ENCODE measurements at regions of chr3 and their contacts with region 1.

Region 1: GRCh38 chr3:17044855-17045254 is 160.1 kb downstream of the PLCL2 start:
- DNase-seq: no peak
- H3K4me3 Mint-ChIP-seq: no peak overlapping the region
- H3K27ac Mint-ChIP-seq: peak overlapping the region; percentile 40
- H3K4me1 Mint-ChIP-seq: peaks cover 57% of the 10 kb centered on the region
- H3K27me3 Mint-ChIP-seq: no peaks in the 10 kb centered on the region

Region 2: DNA sequence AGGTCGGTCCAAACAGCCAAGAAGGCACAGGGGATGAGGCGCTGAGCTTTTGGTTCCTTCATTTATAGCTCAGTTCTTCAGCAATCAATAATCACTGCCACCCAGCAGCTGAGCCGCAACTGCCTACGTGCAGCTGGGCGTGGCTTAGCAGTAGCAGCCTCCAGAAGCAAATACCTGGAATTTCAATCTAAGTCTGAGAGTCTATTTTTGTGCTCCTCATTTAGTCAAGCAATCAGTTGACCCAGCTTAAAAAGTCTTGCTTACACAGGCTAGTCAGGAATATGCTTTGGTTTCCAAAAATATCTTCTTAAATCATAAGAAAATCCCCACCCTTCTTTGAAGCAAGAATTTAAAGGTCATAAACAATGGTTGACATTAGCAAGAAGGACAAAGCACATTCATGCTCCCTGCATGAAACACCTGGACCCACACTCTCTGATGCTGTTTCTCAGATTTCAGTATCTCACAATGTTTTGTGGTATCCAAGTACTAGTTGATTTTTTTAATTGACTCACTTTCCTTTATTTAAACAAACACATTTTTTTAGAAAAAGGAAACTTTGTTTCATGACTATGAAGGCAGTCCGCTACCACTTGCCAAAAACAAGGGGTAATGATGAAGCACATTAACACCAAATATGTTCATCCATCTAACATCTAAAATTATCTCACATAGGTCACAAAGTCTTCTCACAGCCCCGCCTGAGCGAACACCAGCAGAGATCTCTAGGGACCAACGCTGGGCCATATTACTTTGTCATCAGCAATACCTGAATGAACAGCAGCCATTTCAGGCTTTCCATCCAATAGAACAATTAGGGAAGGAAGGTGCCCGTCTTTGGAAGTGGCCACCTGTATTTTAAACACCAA is 673.7 kb before region 1 on chr3:
- intact Hi-C with region 1: no loop called
- DNase-seq: no peak
- H3K4me3 Mint-ChIP-seq: peak overlapping the region; percentile 25
- H3K27ac Mint-ChIP-seq: peak overlapping the region; percentile 82
- H3K4me1 Mint-ChIP-seq: peaks cover 79% of the 10 kb centered on the region
- H3K27me3 Mint-ChIP-seq: no peaks in the 10 kb centered on the region

Region 3: GRCh38 chr3:17032407-17033034 is 12.3 kb before region 1 on chr3:
- intact Hi-C with region 1: loop called (anchors 1 kb)
- DNase-seq: no peak
- H3K4me3 Mint-ChIP-seq: no peak overlapping the region
- H3K27ac Mint-ChIP-seq: peak overlapping the region; percentile 2
- H3K4me1 Mint-ChIP-seq: peaks cover 64% of the 10 kb centered on the region
- H3K27me3 Mint-ChIP-seq: peaks cover 1% of the 10 kb centered on the region

Region 4: DNA sequence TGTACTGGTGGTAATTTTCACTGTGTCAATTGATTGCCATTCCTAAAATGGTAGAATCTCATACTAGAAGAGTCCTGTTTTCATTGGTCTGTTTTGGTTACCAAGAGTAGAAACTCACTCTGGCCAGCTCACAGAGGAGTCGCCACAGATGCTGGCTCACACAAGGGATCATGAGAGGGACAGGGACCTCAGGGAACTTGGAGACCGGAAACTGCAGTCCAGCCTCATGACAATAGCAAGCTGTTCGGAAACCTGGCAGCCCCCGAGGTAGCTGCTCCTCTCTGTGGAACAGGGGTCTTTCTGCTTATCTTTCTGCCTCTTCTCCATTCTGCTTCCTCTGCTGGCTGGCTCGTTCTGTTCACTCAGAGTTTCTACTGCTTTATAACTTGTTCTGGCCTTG is 32.8 kb after region 1 on chr3:
- intact Hi-C with region 1: loop called (anchors 2 kb)
- DNase-seq: no peak
- H3K4me3 Mint-ChIP-seq: no peak overlapping the region
- H3K27ac Mint-ChIP-seq: peak overlapping the region; percentile 73
- H3K4me1 Mint-ChIP-seq: peaks cover 68% of the 10 kb centered on the region
- H3K27me3 Mint-ChIP-seq: no peaks in the 10 kb centered on the region

Region 5: DNA sequence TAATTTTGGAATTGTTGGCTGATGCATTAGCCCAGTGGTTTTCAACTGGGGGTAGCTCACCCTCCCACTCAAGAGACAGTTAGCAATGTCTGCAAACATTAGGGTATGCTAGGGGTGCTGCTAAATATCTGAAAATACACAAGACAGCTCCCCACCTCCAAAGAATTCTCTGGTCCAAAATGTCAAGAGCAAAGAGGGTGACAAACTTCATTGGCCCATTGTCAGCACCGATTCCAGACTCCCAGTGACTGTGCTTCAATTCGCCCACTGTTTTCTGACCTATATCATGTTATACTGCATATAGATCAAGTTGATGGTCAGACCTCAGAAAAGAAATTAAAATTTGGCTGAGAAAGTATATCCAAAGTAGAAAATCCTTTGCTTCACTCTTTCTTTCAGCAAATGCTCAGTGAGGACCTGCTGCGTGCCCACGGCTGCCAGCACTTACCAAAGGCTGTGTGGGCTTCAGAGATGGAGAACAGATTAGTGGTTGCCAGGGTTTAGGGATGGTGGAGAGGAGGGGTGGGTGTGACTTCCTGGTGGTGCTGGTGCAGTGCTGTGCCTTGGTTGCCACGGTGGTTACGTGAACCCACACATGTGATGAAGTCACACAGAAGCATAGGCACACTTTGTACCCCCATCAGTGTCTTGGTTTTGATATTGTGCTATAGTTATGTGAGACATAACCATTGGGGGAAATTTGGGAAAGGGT is 43.9 kb after region 1 on chr3:
- intact Hi-C with region 1: loop called (anchors 2 kb)
- DNase-seq: no peak
- H3K4me3 Mint-ChIP-seq: peak overlapping the region; percentile 27
- H3K27ac Mint-ChIP-seq: peak overlapping the region; percentile 25
- H3K4me1 Mint-ChIP-seq: peaks cover 39% of the 10 kb centered on the region
- H3K27me3 Mint-ChIP-seq: no peaks in the 10 kb centered on the region

Region 6: GRCh38 chr3:17140670-17141505 is 96.0 kb after region 1 on chr3:
- intact Hi-C with region 1: no loop called
- DNase-seq: no peak
- H3K4me3 Mint-ChIP-seq: no peak overlapping the region
- H3K27ac Mint-ChIP-seq: no peak overlapping the region
- H3K4me1 Mint-ChIP-seq: peaks cover 29% of the 10 kb centered on the region
- H3K27me3 Mint-ChIP-seq: peaks cover 9% of the 10 kb centered on the region

Region 7: DNA sequence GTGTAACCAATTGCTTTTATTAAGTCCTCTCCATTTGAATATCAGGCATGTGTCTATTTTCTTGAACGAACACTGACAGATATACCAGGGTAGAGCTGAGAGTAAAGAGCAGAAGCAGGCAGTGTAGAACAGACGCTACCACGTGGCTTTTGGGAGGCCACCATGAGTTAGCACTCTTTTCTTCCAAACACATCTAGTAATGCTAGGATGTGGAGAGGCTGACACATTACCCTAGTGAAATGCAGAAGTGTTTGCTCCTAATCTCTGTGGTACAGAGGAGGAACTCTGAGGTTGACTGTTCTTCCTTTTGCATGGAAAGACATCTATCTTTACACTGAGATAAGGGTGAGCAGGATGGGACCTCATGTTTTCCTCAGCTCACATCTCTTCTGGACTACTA is 1164.0 kb after region 1 on chr3:
- intact Hi-C with region 1: loop called (anchors 10 kb)
- DNase-seq: no peak
- H3K4me3 Mint-ChIP-seq: no peak overlapping the region
- H3K27ac Mint-ChIP-seq: no peak overlapping the region
- H3K4me1 Mint-ChIP-seq: peaks cover 6% of the 10 kb centered on the region
- H3K27me3 Mint-ChIP-seq: peaks cover 2% of the 10 kb centered on the region

Measured in activated T-helper 1 cell treated with anti-CD3 and anti-CD28 coated beads, Interleukin-12 subunit alpha, Interleukin-12 subunit beta, Interleukin-2, Interleukin-4 antibody, amounts not matched to agents 30 ng/mL and 10 ng/mL and 1 ng/mL, durations not matched to agents 14 hours and 24 hours and 36 hours (primary cell).